HAP-1 (cell line): ENCODE measurements at regions of chr6 and their contacts with region 1.

Region 1: GRCh38 chr6:87393022-87393622 is 14.7 kb upstream of the CFAP206 start:
- DNase-seq: peak; percentile 42 to 73
- H3K4me3 ChIP-seq: no peak overlapping the region
- H3K4me1 ChIP-seq: peaks cover 4% of the 10 kb centered on the region; the same call in 1 of the 2 replicates
- H3K27me3 ChIP-seq: no peaks in the 10 kb centered on the region

Region 2: DNA sequence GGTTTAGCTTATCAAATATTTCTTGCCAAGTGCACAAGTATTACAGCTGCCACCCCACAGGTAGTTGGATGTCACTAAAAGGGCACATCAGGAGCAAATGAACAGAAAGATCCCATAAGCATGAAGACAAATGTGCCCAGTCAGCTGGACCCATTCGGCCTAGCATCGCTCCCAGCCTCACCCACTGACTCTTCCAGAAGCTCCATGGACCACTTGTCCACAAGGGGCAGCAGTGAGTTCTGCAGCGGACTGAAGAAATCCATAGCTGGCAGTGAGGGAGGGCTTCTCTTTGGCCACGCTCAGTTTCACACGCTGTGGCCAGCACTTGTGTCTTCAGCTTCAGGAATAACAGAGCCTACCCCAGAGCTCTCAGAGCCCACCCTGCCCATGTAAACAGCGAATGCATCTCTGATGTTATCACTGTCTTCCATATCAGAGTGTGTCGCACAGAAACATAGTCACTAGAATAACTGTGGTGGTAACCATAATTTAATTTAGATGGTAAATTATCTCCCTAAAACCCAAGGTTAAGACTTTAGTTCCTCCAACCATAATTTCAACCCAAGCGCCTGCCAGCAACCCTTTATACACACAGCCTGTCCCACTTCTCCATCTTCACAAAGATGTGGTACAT is 314.0 kb before region 1 on chr6:
- in situ Hi-C with region 1: loop called (anchors 10 kb)
- DNase-seq: peak; percentile 70 to 89
- H3K4me3 ChIP-seq: no peak overlapping the region
- H3K4me1 ChIP-seq: no peaks in the 10 kb centered on the region
- H3K27me3 ChIP-seq: peaks cover 2% of the 10 kb centered on the region; the same call in 1 of the 2 replicates